B cell (primary cell): ENCODE measurements at regions of chr18 and their contacts with region 1.

Region 1: GRCh38 chr18:26090130-26091046 is at the start of gene SS18:
- DNase-seq: peak; percentile 98
- ATAC-seq: peak; percentile 82
- H3K4me3 ChIP-seq: peak within 1 kb of the TSS; percentile 79 to 100 (median 94)
- H3K4me3 Mint-ChIP-seq: peak within 1 kb of the TSS; percentile 99
- H3K27ac ChIP-seq: peak within 1 kb of the TSS; percentile 98
- H3K27ac Mint-ChIP-seq: peak within 1 kb of the TSS; percentile 98
- H3K4me1 ChIP-seq: peaks cover 23 to 32% of the 10 kb centered on the region in 2 donors
- H3K4me1 Mint-ChIP-seq: peaks cover 44% of the 10 kb centered on the region
- H3K27me3 ChIP-seq: no peaks in the 10 kb centered on the region
- H3K27me3 Mint-ChIP-seq: no peaks in the 10 kb centered on the region
- CTCF ChIP-seq: no peak
- total RNA-seq, gene SS18: 105 and 114 TPM in 2 replicates

Region 2: GRCh38 chr18:25351777-25352628 is 738.4 kb before region 1 on chr18 and contains the start of gene ZNF521:
- CTCF ChIA-PET with region 1: no interaction called
- POLR2A ChIA-PET with region 1: no interaction called
- intact Hi-C with region 1: loop called (anchors 10 kb)
- DNase-seq: peak; percentile 77
- ATAC-seq: peak; percentile 85
- H3K4me3 ChIP-seq: peak within 1 kb of the TSS; percentile 53 to 73 (median 70)
- H3K4me3 Mint-ChIP-seq: peak within 1 kb of the TSS; percentile 85
- H3K27ac ChIP-seq: no peak within 1 kb of the TSS
- H3K27ac Mint-ChIP-seq: peak within 1 kb of the TSS; percentile 46
- H3K4me1 ChIP-seq: peaks cover 24 to 28% of the 10 kb centered on the region in 2 donors
- H3K4me1 Mint-ChIP-seq: peaks cover 16% of the 10 kb centered on the region
- H3K27me3 ChIP-seq: peaks cover 0 to 53% (median 41%) of the 10 kb centered on the region in 4 experiments
- H3K27me3 Mint-ChIP-seq: peaks cover 43% of the 10 kb centered on the region
- CTCF ChIP-seq: no peak
- total RNA-seq, gene ZNF521: 9.0 and 12.3 TPM in 2 replicates

Region 3: GRCh38 chr18:25985707-25986394 is 104.5 kb before region 1 on chr18:
- CTCF ChIA-PET with region 1: no interaction called
- POLR2A ChIA-PET with region 1: no interaction called
- intact Hi-C with region 1: no loop called
- DNase-seq: no peak
- ATAC-seq: no peak
- H3K4me3 ChIP-seq: no peak overlapping the region
- H3K4me3 Mint-ChIP-seq: no peak overlapping the region
- H3K27ac ChIP-seq: no peak overlapping the region
- H3K27ac Mint-ChIP-seq: no peak overlapping the region
- H3K4me1 ChIP-seq: no peaks in the 10 kb centered on the region
- H3K4me1 Mint-ChIP-seq: no peaks in the 10 kb centered on the region
- H3K27me3 ChIP-seq: no peaks in the 10 kb centered on the region
- H3K27me3 Mint-ChIP-seq: peaks cover 3% of the 10 kb centered on the region
- CTCF ChIP-seq: no peak

Region 4: GRCh38 chr18:26133652-26134051 is 43.3 kb after region 1 on chr18 and contains the start of gene PSMA8:
- CTCF ChIA-PET with region 1: no interaction called
- POLR2A ChIA-PET with region 1: no interaction called
- intact Hi-C with region 1: loop called (anchors 5 kb)
- DNase-seq: peak; percentile 64
- ATAC-seq: peak; percentile 74
- H3K4me3 ChIP-seq: peak within 1 kb of the TSS in 4 of 5 experiments; percentile 14 to 51 (median 42)
- H3K4me3 Mint-ChIP-seq: peak within 1 kb of the TSS; percentile 83
- H3K27ac ChIP-seq: peak within 1 kb of the TSS; percentile 40 to 57
- H3K27ac Mint-ChIP-seq: peak within 1 kb of the TSS; percentile 76
- H3K4me1 ChIP-seq: no peaks in the 10 kb centered on the region
- H3K4me1 Mint-ChIP-seq: peaks cover 13% of the 10 kb centered on the region
- H3K27me3 ChIP-seq: no peaks in the 10 kb centered on the region
- H3K27me3 Mint-ChIP-seq: no peaks in the 10 kb centered on the region
- CTCF ChIP-seq: no peak
- total RNA-seq, gene PSMA8: 0.91 and 1.0 TPM in 2 replicates

Region 5: GRCh38 chr18:26159353-26159752 is 69.0 kb after region 1 on chr18:
- CTCF ChIA-PET with region 1: interaction called, 3 read pairs
- POLR2A ChIA-PET with region 1: no interaction called
- intact Hi-C with region 1: loop called (anchors 2 kb)
- DNase-seq: peak; percentile 35
- ATAC-seq: no peak
- H3K4me3 ChIP-seq: no peak overlapping the region
- H3K4me3 Mint-ChIP-seq: no peak overlapping the region
- H3K27ac ChIP-seq: no peak overlapping the region
- H3K27ac Mint-ChIP-seq: no peak overlapping the region
- H3K4me1 ChIP-seq: peaks cover 0 to 4% of the 10 kb centered on the region in 2 donors
- H3K4me1 Mint-ChIP-seq: peaks cover 6% of the 10 kb centered on the region
- H3K27me3 ChIP-seq: no peaks in the 10 kb centered on the region
- H3K27me3 Mint-ChIP-seq: no peaks in the 10 kb centered on the region
- CTCF ChIP-seq: peak; percentile 62

Region 6: DNA sequence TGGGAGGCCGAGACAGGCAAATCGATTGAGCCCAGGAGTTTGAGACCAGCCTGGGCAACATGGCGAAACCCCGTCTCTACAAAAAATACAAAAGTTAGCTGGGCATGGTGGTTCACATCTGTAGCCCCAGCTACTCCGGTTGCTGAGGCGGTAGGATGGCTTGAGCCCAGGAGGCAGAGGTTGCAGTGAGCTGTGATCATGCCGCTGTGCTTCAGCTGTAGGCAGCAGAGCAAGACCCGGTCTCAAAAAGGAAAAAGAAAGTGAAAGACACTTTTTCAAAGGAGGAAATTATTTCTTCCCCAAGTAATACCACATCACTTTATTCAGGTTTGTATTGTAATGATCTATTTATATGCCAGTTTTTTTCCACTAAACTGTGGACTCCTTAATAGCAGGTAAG is 100.1 kb after region 1 on chr18:
- CTCF ChIA-PET with region 1: no interaction called
- POLR2A ChIA-PET with region 1: no interaction called
- intact Hi-C with region 1: loop called (anchors 1 kb)
- DNase-seq: peak; percentile 79
- ATAC-seq: peak; percentile 93
- H3K4me3 ChIP-seq: peak overlapping the region in 4 of 5 experiments; percentile 11 to 59 (median 18)
- H3K4me3 Mint-ChIP-seq: peak overlapping the region; percentile 57
- H3K27ac ChIP-seq: peak overlapping the region; percentile 59 to 90
- H3K27ac Mint-ChIP-seq: peak overlapping the region; percentile 80
- H3K4me1 ChIP-seq: peaks cover 20 to 26% of the 10 kb centered on the region in 2 donors
- H3K4me1 Mint-ChIP-seq: peaks cover 32% of the 10 kb centered on the region
- H3K27me3 ChIP-seq: no peaks in the 10 kb centered on the region
- H3K27me3 Mint-ChIP-seq: no peaks in the 10 kb centered on the region
- CTCF ChIP-seq: no peak

Region 7: DNA sequence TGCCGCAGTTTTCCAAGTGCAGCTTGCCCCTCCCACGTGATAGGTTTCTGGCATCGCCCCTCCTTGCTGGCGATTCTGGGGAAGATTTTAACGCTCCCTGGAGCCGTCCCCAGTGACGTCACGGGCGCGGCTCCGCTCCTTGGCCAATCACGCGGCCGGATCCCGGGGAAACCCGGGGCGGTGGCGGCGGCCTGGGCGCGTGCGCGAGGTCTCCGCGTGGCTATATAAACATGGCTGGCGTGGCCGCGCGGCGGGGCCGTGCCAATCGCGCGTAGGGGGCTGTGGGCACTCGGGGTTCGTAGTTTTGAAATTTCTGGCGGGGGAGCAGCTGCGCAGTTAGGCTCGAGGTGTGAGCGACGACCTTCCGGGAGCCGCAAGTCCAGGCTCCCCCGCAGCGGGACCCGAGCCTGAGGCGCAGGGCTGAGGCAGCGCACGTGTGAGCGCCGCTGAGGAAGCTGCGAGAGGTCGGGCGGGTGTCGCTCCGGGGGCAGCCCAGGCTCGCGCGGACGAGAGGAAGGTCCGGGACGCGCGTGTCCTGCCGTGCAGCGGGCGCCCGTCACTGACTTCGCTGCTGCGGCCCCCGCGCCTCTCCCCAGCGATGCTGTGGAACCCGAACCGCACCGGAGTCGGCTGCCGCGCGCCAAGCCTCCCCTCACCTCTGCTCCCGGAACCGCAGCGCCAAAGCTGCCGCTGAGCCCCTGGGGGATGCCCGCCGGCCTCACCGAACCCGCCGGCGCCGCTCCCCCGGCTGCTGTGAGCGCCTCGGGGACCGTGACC is 136.0 kb after region 1 on chr18 and contains the start of gene TAF4B:
- CTCF ChIA-PET with region 1: no interaction called
- POLR2A ChIA-PET with region 1: interaction called, 6 read pairs
- intact Hi-C with region 1: loop called (anchors 1 kb)
- DNase-seq: peak; percentile 96
- ATAC-seq: peak; percentile 85
- H3K4me3 ChIP-seq: peak within 1 kb of the TSS; percentile 66 to 91 (median 82)
- H3K4me3 Mint-ChIP-seq: peak within 1 kb of the TSS; percentile 94
- H3K27ac ChIP-seq: peak within 1 kb of the TSS; percentile 88 to 95
- H3K27ac Mint-ChIP-seq: peak within 1 kb of the TSS; percentile 96
- H3K4me1 ChIP-seq: peaks cover 21 to 24% of the 10 kb centered on the region in 2 donors
- H3K4me1 Mint-ChIP-seq: peaks cover 38% of the 10 kb centered on the region
- H3K27me3 ChIP-seq: no peaks in the 10 kb centered on the region
- H3K27me3 Mint-ChIP-seq: no peaks in the 10 kb centered on the region
- CTCF ChIP-seq: no peak
- total RNA-seq, gene TAF4B: 15.6 and 16.1 TPM in 2 replicates

Region 8: GRCh38 chr18:27017901-27018500 is 927.6 kb after region 1 on chr18:
- CTCF ChIA-PET with region 1: no interaction called
- POLR2A ChIA-PET with region 1: no interaction called
- intact Hi-C with region 1: no loop called
- DNase-seq: no peak
- ATAC-seq: no peak
- H3K4me3 ChIP-seq: no peak overlapping the region
- H3K4me3 Mint-ChIP-seq: no peak overlapping the region
- H3K27ac ChIP-seq: no peak overlapping the region
- H3K27ac Mint-ChIP-seq: no peak overlapping the region
- H3K4me1 ChIP-seq: no peaks in the 10 kb centered on the region
- H3K4me1 Mint-ChIP-seq: no peaks in the 10 kb centered on the region
- H3K27me3 ChIP-seq: no peaks in the 10 kb centered on the region
- H3K27me3 Mint-ChIP-seq: no peaks in the 10 kb centered on the region
- CTCF ChIP-seq: no peak